ENCODE measurements at regions of chr7 and their contacts with region 1.

Region 1: GRCh38 chr7:20172736-20173334 is 44.3 kb downstream of the MACC1 start:
- H3K4me3 ChIP-seq: no peak overlapping the region
- H3K27ac ChIP-seq: no peak overlapping the region
- H3K4me1 ChIP-seq: no peaks in the 10 kb centered on the region
- CTCF ChIP-seq: no peak; the same call in 1 of the 2 replicates

Region 2: DNA sequence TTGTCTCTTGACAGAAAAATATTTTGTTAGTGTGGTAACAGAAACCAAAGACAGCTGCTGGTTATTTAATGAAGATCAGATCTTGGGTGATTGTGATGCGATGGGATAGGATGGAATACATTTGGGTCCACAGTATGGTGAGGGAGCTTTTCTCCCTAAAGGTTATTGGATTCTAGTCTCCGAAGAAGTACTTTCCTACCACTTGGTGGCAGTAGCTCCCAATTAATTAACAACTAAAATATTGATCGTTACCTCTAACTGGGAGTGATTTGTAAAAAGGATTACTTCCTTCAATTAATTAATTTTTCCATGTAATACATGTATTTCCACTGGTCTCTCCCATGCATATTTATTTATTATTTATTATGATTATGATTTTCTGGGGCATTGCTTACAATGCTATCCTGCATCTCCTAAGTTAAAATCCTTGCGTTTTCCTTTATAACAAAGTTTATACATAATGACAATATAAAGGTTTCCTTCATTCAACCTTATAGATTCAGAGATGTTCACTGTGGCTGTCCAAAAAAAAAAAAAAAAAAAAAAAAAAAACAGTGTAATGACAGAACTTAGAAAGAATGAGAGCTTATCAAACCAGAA is 425.0 kb before region 1 on chr7:
- CTCF ChIA-PET with region 1: interaction called, 16 read pairs
- POLR2A ChIA-PET with region 1: no interaction called
- H3K4me3 ChIP-seq: no peak overlapping the region
- H3K27ac ChIP-seq: no peak overlapping the region
- H3K4me1 ChIP-seq: no peaks in the 10 kb centered on the region
- CTCF ChIP-seq: no peak

Region 3: DNA sequence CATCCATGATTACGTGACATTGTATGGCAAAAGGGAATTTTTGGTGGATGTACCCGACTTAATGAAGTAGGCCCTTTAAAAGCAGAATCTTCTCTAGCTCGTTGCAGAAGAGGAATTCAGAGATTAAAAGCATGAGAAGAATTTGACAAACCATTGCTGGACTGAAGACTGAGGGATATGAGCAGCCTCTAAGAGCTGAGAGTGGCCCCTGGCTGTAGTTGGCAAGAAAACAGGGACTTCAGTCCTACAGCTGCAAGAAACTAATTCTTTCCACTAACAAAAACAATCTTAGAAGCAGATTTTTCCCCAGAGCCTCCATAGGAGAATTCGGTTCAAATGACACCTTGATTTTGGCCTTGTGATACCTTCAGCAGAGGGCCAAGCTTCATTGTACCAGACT is 10.3 kb after region 1 on chr7:
- CTCF ChIA-PET with region 1: interaction called, 16 read pairs
- POLR2A ChIA-PET with region 1: no interaction called
- H3K4me3 ChIP-seq: no peak overlapping the region
- H3K27ac ChIP-seq: no peak overlapping the region
- H3K4me1 ChIP-seq: no peaks in the 10 kb centered on the region
- CTCF ChIP-seq: no peak

Region 4: DNA sequence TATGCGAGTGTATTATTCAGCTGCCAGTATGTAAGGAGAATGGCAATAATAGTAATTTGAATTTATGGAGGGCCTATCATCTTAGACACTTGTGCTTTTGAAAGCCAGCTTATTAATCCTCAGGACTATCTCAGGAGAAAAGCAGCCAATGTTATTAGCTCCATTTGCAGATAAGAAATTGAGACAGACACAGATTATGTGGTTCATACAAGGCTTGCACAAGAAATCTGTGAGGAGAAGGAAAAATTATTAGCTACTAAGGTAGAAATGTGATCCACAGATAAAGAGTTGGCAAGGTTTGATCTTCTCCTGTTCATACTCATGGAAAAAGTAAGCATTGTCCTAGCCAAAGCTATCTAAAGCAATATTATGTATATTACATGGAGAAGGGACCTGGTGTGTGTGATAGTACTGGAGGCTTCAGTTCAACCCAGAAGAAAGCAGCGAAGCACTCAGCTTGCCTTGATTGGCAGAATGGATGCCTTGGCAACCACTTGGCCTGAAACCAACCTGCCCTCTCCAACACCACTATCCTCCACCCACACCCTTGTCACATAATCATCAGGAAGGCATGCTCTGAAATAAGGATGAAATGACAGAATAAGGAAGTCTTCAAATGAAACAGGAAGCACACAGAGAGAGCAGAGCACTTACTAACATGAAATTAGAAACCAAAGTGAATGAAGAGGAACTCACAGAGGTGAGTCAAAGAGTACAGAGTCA is 26.3 kb after region 1 on chr7:
- CTCF ChIA-PET with region 1: interaction called, 12 read pairs
- POLR2A ChIA-PET with region 1: no interaction called
- H3K4me3 ChIP-seq: no peak overlapping the region
- H3K27ac ChIP-seq: no peak overlapping the region
- H3K4me1 ChIP-seq: 0 out of 2 replicates have a peak, but pooled peaks cover 5% of the 10 kb centered on the region
- CTCF ChIP-seq: no peak

Region 5: GRCh38 chr7:20219446-20220292 is 46.8 kb after region 1 on chr7:
- CTCF ChIA-PET with region 1: no interaction called
- POLR2A ChIA-PET with region 1: no interaction called
- H3K4me3 ChIP-seq: no peak overlapping the region
- H3K27ac ChIP-seq: no peak overlapping the region; the same call in 1 of the 2 replicates
- H3K4me1 ChIP-seq: no peaks in the 10 kb centered on the region
- CTCF ChIP-seq: no peak